ENCODE measurements at regions of chr7 and their contacts with region 1.

Region 1: DNA sequence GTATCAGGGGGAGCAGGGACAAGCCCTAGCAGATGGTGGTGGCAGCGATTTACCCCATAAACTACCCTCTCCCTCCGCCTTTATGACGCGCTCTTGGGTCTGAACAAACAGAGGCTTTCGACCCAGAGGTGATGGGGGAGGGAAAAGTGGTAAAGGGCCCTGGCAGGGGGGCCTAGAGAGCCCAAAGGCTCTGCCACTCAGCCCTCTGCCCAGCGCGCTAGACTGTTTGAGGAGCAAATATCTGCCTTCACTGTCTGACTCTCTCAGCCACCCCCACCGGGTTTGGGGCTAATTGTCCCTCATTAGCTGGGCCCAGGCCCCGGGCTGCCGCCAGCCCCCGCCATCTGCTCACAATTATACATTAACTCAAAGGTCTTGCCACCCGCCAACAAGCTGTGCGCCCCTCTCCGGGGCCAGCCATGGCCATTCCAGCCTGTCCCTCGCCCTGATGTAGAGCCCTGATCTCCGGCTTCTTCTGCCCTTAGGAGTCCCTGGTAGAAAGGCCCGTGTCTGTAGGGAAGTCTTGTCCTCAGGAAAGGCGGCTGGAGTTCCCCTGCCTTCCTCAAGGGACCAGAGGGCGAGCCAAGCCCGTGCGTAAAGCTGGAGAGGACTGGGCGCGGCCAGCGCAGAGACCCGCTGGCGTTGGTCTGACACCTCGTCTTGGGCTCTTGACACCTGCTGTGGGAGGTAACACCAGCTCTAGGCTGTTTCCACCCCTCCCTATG is 1.9 kb upstream of the PAX4 start:
- DNase-seq: no peak
- H3K4me3 ChIP-seq: no peak overlapping the region
- H3K27ac ChIP-seq: no peak overlapping the region
- H3K4me1 ChIP-seq: no peaks in the 10 kb centered on the region
- H3K27me3 ChIP-seq: peaks cover 30 to 44% of the 10 kb centered on the region in 2 experiments
- CTCF ChIP-seq: no peak
- POLR2A ChIP-seq: no peak

Region 2: DNA sequence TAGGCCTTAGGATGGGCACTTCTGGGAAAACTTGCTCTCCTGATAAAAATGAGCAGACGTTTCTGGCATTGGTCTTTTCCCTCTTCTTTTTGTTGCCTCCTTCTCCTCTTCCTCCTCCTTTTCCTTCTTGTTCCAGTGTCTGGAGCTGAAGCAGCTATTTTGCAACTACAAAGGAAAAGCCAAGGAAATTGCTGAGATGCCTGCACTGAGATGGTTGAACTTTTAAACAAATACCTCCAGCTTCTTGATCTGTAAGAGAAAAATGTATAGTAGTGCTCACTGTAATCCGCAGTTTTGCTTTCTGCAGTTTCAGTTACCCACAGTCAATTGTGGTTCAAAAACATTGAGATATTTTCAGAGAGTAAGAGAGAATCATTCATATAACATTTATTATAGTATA is 24.6 kb after region 1 on chr7:
- CTCF ChIA-PET with region 1: no interaction called
- POLR2A ChIA-PET with region 1: no interaction called
- dilution Hi-C with region 1: no loop called
- intact Hi-C with region 1: loop called (anchors 1 kb)
- DNase-seq: peak; percentile 30
- H3K4me3 ChIP-seq: no peak overlapping the region
- H3K27ac ChIP-seq: no peak overlapping the region
- H3K4me1 ChIP-seq: no peaks in the 10 kb centered on the region
- H3K27me3 ChIP-seq: peaks cover 2 to 6% of the 10 kb centered on the region in 2 experiments
- CTCF ChIP-seq: no peak
- POLR2A ChIP-seq: no peak

Measured in endothelial cell of umbilical vein (primary cell).